ENCODE measurements at regions of chr17 and their contacts with region 1.

Region 1: GRCh38 chr17:49910094-49910857 is 58.7 kb upstream of the DLX4 start:
- DNase-seq: peak; percentile 73
- H3K4me3 ChIP-seq: peak overlapping the region in 1 of 2 experiments; percentile 15; a peak in 1 of 4 replicates
- H3K27ac ChIP-seq: no peak overlapping the region
- H3K4me1 ChIP-seq: peaks cover 0 to 3% of the 10 kb centered on the region in 2 experiments; a peak in 1 of 4 replicates
- H3K27me3 ChIP-seq: peaks cover 93% of the 10 kb centered on the region
- CTCF ChIP-seq: no peak
- EP300 ChIP-seq: no peak
- RAD21 ChIP-seq: no peak

Region 2: DNA sequence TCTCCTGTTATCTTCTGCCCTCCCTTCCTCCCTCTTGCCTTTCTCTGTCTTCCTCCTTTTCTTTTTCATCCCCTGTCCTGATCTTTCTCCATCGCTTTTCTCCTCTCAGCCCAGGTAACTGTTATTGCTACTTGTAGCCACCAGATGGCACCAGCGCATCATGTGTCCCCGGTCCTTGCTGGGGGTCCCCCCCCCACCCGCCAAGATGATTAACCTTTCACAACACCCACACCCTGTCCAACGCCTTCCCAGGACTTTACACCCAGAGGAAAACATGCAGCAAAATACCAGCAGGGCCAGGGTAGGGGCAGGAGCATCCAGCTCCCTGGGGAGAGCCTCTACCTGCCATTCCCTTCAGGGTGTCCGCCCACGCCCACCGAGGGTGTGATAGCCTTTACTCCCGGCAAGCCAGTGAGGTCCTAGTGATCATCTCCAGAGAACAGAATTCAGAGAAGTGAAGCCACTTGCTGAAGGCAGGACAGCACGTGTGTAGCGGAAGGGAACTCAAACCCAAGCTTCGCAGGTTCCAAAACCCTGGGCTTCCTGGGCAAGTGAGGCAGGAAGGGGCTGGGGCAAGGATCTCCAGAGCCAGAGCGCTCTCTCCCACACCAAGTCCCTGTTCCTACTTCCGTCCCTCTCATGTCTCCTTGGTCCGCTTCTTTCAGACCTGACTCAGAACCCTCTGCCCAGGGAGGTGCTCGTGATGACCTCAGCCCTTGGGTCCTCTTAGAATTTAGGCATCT is 49.0 kb before region 1 on chr17:
- CTCF ChIA-PET with region 1: interaction called, 28 read pairs
- POLR2A ChIA-PET with region 1: no interaction called
- DNase-seq: peak; percentile 93
- H3K4me3 ChIP-seq: no peak overlapping the region
- H3K27ac ChIP-seq: no peak overlapping the region
- H3K4me1 ChIP-seq: no peaks in the 10 kb centered on the region
- H3K27me3 ChIP-seq: peaks cover 6% of the 10 kb centered on the region; the same call in 1 of the 2 replicates
- CTCF ChIP-seq: peak; percentile 85
- EP300 ChIP-seq: no peak
- RAD21 ChIP-seq: peak; percentile 84

Region 3: GRCh38 chr17:49899191-49899485 is 11.1 kb before region 1 on chr17:
- CTCF ChIA-PET with region 1: interaction called, 22 read pairs
- POLR2A ChIA-PET with region 1: no interaction called
- DNase-seq: no peak
- H3K4me3 ChIP-seq: no peak overlapping the region
- H3K27ac ChIP-seq: no peak overlapping the region
- H3K4me1 ChIP-seq: no peaks in the 10 kb centered on the region; a peak in 1 of 4 replicates
- H3K27me3 ChIP-seq: peaks cover 98% of the 10 kb centered on the region
- CTCF ChIP-seq: peak; percentile 35
- EP300 ChIP-seq: no peak
- RAD21 ChIP-seq: no peak; the same call in 1 of the 2 replicates

Region 4: GRCh38 chr17:49926886-49927285 is 16.6 kb after region 1 on chr17:
- CTCF ChIA-PET with region 1: interaction called, 10 read pairs
- POLR2A ChIA-PET with region 1: interaction called, 3 read pairs
- DNase-seq: no peak
- H3K4me3 ChIP-seq: no peak overlapping the region
- H3K27ac ChIP-seq: no peak overlapping the region
- H3K4me1 ChIP-seq: peaks cover 0 to 1% of the 10 kb centered on the region in 2 experiments; a peak in 1 of 4 replicates
- H3K27me3 ChIP-seq: peaks cover 96% of the 10 kb centered on the region
- CTCF ChIP-seq: no peak
- EP300 ChIP-seq: no peak
- RAD21 ChIP-seq: no peak

Measured in SK-N-SH (cell line).